Mammary epithelial cell (primary cell): ENCODE measurements at regions of chr11 and their contacts with region 1.

Region 1: DNA sequence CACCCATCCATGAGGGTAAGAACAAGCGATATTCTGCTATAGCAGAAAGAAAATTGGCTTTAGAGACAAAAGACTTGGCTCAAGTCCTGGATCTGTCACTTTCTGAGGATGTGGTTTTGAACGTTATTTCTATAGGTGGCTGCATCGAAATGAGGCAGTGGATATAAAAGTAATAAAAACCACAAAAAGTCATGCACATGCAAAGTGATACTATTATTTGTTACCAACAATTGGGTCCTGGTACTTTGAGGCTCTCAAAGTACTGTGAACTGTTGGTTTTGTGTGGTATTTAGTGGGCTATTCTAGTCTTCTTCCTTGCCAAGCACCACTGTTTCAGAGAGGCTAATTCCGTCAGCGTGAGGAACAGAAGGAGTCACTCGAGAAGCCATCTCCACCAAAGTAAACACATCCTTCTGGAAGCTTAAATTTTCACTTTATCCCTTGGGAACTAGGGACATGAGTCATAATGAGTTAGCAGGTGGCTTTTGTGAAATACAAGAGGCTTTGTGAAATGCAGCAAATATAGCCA is 13.1 kb downstream of the UBASH3B start:
- DNase-seq: peak; percentile 64
- H3K4me3 ChIP-seq: no peak overlapping the region
- H3K27ac ChIP-seq: no peak overlapping the region
- H3K4me1 ChIP-seq: peaks cover 22% of the 10 kb centered on the region
- H3K27me3 ChIP-seq: no peaks in the 10 kb centered on the region
- CTCF ChIP-seq: no peak

Region 2: DNA sequence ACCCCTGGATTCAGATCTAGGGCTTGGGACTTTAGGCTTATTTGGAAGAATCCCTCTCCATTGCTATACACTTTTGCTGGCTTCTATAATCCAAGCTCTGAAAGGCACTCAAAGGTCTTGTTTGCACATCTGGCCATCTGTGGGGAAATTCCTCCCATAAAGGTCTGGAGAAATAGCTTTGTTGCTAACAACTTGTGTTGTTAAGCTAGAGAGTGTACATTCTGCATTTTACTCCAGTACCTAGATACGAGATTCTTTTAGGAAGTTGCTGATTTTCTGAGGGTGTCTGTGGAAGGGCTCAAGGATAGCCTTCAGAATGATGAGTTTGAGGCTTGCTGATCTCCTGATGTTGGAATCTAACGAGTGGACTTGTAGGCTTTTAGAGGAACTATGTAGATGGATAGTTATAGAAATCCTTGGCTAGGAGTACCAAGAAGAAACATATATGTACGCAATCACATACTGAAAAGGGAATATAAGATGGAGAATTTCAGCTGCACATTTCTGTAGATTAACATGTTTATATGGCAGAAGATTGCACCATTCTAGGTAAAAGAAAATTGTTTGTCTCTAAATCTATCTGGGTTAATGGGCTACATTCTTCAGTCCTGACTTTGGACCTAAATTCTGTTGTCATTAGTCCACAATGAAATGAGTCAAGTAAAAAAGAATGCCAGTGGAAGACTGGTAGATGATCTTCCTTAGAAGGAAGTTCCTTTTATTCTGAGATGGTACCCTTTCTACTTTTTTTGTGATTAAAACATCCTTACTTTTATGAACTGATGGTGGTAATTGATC is 37.9 kb after region 1 on chr11:
- CTCF ChIA-PET with region 1: no interaction called
- dilution Hi-C with region 1: loop called (anchors 5 kb)
- in situ Hi-C with region 1: no loop called
- intact Hi-C with region 1: no loop called
- DNase-seq: peak; percentile 57
- H3K4me3 ChIP-seq: no peak overlapping the region
- H3K27ac ChIP-seq: peak overlapping the region; percentile 62
- H3K4me1 ChIP-seq: peaks cover 59% of the 10 kb centered on the region
- H3K27me3 ChIP-seq: no peaks in the 10 kb centered on the region
- CTCF ChIP-seq: no peak

Region 3: GRCh38 chr11:122754553-122755322 is 86.1 kb after region 1 on chr11:
- CTCF ChIA-PET with region 1: no interaction called
- dilution Hi-C with region 1: loop called (anchors 5 kb)
- in situ Hi-C with region 1: no loop called
- intact Hi-C with region 1: no loop called
- DNase-seq: no peak
- H3K4me3 ChIP-seq: no peak overlapping the region
- H3K27ac ChIP-seq: no peak overlapping the region
- H3K4me1 ChIP-seq: peaks cover 14% of the 10 kb centered on the region
- H3K27me3 ChIP-seq: no peaks in the 10 kb centered on the region
- CTCF ChIP-seq: peak; percentile 5 to 20